ENCODE measurements at regions of chr17 and their contacts with region 1.

Region 1: DNA sequence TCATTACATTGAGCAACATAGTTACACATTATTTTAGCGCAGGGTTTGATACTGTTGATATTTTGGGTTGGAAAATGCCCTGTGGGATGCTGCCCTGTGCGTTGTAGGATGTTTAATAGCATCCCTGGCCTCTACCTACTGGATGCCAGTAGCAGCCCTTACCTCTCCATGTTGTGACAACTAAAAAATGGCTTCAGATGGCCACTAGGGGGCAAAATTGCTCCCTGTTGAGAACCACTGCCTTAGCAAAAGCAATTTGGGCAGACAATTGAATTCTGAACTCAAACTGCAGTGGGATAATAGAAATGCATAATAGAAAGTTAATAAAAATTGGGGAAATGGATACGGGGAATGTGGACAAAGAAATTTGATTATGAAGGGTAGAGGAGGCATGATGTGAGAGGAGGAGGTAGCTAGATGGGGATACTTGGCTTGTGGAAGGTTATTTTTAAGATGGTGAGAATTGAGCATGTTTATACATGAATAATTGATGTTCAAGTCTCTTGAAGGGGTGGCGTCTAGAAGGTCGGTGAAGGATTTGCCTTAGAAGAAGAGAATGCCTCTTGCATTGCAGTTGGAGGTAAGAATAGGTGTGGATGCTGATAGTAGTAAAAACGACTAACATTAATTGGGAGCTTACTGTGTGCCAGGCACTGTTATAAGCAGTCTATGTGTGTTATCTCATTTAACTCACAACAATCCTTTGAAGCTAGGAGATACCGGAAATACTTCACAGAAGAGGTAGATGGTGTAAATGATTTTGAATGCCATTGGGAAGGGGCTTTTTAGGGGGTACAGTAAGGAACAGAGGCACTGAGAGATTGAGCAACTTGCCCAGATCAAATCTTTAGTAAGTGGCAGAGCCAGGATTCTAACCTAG is 19.0 kb downstream of the HEATR9 start:
- DNase-seq: peak; percentile 56 to 65 (median 59)
- H3K4me3 ChIP-seq: no peak overlapping the region
- H3K4me3 Mint-ChIP-seq: peak overlapping the region in 4 of 8 donors; percentile 27 to 51 (median 43)
- H3K27ac ChIP-seq: no peak overlapping the region
- H3K27ac Mint-ChIP-seq: peak overlapping the region; percentile 34 to 79 (median 58)
- H3K4me1 ChIP-seq: peaks cover 10% of the 10 kb centered on the region
- H3K4me1 Mint-ChIP-seq: peaks cover 12 to 17% (median 15%) of the 10 kb centered on the region in 4 donors
- H3K27me3 ChIP-seq: no peaks in the 10 kb centered on the region
- H3K27me3 Mint-ChIP-seq: no peaks in the 10 kb centered on the region

Region 2: DNA sequence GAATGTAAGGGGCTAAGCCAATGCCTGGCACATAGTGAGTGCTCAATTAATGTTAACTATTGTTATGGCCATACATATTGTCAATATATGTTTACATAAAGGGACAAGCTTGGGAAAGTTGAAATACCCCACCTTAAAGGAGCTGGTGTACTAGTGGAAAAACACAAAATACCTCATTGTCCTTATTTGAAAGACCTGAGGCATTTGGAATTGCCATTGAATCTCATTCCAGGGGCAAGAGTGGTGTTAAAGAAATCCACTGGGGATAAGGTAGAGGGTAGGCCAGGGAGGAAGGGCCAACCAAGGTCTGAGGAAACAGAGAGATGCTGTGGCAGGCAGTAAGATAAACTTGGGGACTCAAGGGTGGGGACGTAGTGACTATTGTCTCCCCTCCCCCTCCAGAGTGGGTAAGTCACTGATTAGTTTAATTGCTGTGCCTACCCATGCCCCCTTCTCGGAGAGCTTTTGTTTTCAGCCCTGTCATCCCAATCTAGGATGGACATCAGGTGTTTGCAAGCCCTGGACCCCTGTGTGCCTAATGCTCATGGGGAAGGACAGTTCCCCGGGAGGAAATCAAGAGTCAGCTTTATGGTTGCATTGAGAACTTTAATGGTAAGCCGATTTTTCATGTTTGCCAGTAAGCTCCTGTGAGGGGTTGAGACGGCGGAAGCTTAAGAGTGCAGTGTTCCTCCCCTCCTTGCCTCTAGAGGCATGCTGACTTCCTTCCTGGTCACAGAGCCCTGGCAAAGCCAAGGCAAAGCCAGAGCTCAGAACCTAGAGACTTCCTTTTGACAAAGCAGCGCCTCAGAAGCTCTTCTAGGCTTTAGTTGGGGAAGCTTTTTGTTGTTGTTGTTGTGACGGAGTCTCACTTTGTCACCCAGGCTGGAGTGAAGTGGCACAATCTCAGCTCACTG is 21.5 kb after region 1 on chr17:
- CTCF ChIA-PET with region 1: interaction called, 24 read pairs
- POLR2A ChIA-PET with region 1: interaction called, 15 read pairs
- intact Hi-C with region 1: no loop called
- DNase-seq: peak in 4 of 5 donors; percentile 26 to 49 (median 36)
- H3K4me3 ChIP-seq: no peak overlapping the region
- H3K4me3 Mint-ChIP-seq: peak overlapping the region in 1 of 8 donors; percentile 13
- H3K27ac ChIP-seq: no peak overlapping the region
- H3K27ac Mint-ChIP-seq: peak overlapping the region in 5 of 7 donors; percentile 6 to 55 (median 43)
- H3K4me1 ChIP-seq: peaks cover 15% of the 10 kb centered on the region
- H3K4me1 Mint-ChIP-seq: peaks cover 14 to 48% (median 30%) of the 10 kb centered on the region in 4 donors
- H3K27me3 ChIP-seq: no peaks in the 10 kb centered on the region
- H3K27me3 Mint-ChIP-seq: no peaks in the 10 kb centered on the region

Region 3: DNA sequence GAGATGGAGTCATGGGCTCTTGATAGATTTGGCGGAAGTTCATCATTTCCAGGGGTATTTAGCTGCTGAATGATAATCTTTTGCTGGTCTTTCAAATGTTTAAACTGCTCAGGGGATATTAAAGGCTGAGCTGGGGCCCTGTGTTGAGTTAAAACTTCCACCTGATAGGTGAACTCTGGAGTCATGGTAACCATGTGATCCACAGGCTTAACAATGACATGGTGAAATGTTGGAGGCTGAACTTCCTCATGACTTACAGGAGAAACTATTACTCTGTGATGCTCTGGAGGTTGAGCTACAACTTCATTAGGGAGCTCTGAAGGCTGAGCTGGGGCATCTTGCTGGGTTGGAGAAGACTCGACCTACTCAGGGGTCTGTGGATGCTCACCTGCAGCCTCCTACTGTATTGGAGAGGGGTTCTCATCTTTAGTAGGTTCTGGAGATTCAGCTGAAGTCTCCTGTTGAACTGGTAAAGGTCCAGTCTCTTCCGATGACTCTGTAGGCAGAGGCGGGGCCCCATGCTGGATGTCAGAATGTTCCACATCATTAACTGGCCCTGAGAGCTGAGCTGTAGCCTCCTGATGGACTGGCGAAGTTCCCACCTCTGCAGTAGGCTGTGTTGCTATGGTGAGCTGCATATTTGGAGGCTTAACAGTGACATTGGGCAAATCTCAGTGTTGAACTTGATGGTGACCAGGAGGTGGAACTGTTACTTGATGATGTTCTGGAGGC is 56.6 kb after region 1 on chr17:
- CTCF ChIA-PET with region 1: interaction called, 10 read pairs
- POLR2A ChIA-PET with region 1: interaction called, 7 read pairs
- intact Hi-C with region 1: loop called (anchors 1 kb)
- DNase-seq: no peak
- H3K4me3 ChIP-seq: no peak overlapping the region
- H3K4me3 Mint-ChIP-seq: no peak overlapping the region
- H3K27ac ChIP-seq: no peak overlapping the region
- H3K27ac Mint-ChIP-seq: peak overlapping the region in 1 of 7 donors; percentile 11
- H3K4me1 ChIP-seq: no peaks in the 10 kb centered on the region
- H3K4me1 Mint-ChIP-seq: peaks cover 0 to 9% (median 6%) of the 10 kb centered on the region in 4 donors
- H3K27me3 ChIP-seq: no peaks in the 10 kb centered on the region
- H3K27me3 Mint-ChIP-seq: no peaks in the 10 kb centered on the region

Region 4: GRCh38 chr17:35947156-35947585 is 97.5 kb after region 1 on chr17:
- CTCF ChIA-PET with region 1: interaction called, 10 read pairs
- POLR2A ChIA-PET with region 1: interaction called, 3 read pairs
- intact Hi-C with region 1: loop called (anchors 1 kb)
- DNase-seq: peak in 4 of 5 donors; percentile 17 to 32 (median 28)
- H3K4me3 ChIP-seq: no peak overlapping the region
- H3K4me3 Mint-ChIP-seq: no peak overlapping the region
- H3K27ac ChIP-seq: no peak overlapping the region
- H3K27ac Mint-ChIP-seq: no peak overlapping the region
- H3K4me1 ChIP-seq: peaks cover 3% of the 10 kb centered on the region
- H3K4me1 Mint-ChIP-seq: peaks cover 0 to 6% (median 0%) of the 10 kb centered on the region in 4 donors
- H3K27me3 ChIP-seq: no peaks in the 10 kb centered on the region
- H3K27me3 Mint-ChIP-seq: no peaks in the 10 kb centered on the region

Region 5: GRCh38 chr17:36072431-36073121 is 222.9 kb after region 1 on chr17:
- CTCF ChIA-PET with region 1: interaction called, 22 read pairs
- POLR2A ChIA-PET with region 1: no interaction called
- intact Hi-C with region 1: no loop called
- DNase-seq: peak; percentile 28 to 44 (median 37)
- H3K4me3 ChIP-seq: no peak overlapping the region
- H3K4me3 Mint-ChIP-seq: peak overlapping the region in 3 of 8 donors; percentile 24 to 60 (median 27)
- H3K27ac ChIP-seq: no peak overlapping the region
- H3K27ac Mint-ChIP-seq: peak overlapping the region in 1 of 7 donors; percentile 4
- H3K4me1 ChIP-seq: no peaks in the 10 kb centered on the region
- H3K4me1 Mint-ChIP-seq: peaks cover 3 to 9% (median 5%) of the 10 kb centered on the region in 4 donors
- H3K27me3 ChIP-seq: no peaks in the 10 kb centered on the region
- H3K27me3 Mint-ChIP-seq: no peaks in the 10 kb centered on the region

Region 6: DNA sequence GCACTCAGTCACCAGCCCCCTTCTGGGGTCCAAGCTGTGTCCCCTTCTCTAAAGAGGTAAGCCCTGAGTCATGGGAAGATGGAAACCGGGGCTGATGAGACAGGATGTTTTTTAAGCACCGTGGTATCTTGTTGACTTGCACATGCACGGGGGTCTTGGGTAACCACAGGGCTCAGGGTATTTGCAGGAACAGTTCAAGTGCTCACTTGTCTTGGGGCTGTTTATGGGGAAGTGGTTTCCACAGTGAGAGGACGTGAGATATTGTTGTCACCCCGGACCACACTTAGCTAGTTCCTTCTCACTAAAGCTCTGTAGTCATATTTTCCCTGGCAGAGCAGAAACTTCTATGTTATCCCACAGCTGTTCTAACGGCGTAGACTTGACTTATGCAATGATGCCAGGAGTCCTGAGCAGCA is 339.2 kb after region 1 on chr17:
- CTCF ChIA-PET with region 1: no interaction called
- POLR2A ChIA-PET with region 1: no interaction called
- intact Hi-C with region 1: no loop called
- DNase-seq: peak in 3 of 5 donors; percentile 40 to 71 (median 53)
- H3K4me3 ChIP-seq: no peak overlapping the region
- H3K4me3 Mint-ChIP-seq: peak overlapping the region in 5 of 8 donors; percentile 0 to 31 (median 15)
- H3K27ac ChIP-seq: no peak overlapping the region
- H3K27ac Mint-ChIP-seq: peak overlapping the region in 3 of 7 donors; percentile 30 to 79 (median 64)
- H3K4me1 ChIP-seq: no peaks in the 10 kb centered on the region
- H3K4me1 Mint-ChIP-seq: peaks cover 10 to 33% (median 20%) of the 10 kb centered on the region in 4 donors
- H3K27me3 ChIP-seq: no peaks in the 10 kb centered on the region
- H3K27me3 Mint-ChIP-seq: peaks cover 28 to 34% of the 10 kb centered on the region in 2 donors

Measured in CD4-positive, alpha-beta memory T cell (primary cell).